Tibial artery (tissue), 4 donors: ENCODE measurements at regions of chr10 and their contacts with region 1.

Region 1: GRCh38 chr10:92965314-92965713 is 95.3 kb upstream of the CYP26C1 start:
- DNase-seq: no peak
- H3K4me3 ChIP-seq: no peak overlapping the region
- H3K27ac ChIP-seq: no peak overlapping the region
- H3K4me1 ChIP-seq: peaks cover 0 to 8% (median 0%) of the 10 kb centered on the region in 4 donors
- H3K27me3 ChIP-seq: no peaks in the 10 kb centered on the region
- CTCF ChIP-seq: peak; percentile 58 to 59

Region 2: GRCh38 chr10:93062514-93063143 is 97.3 kb after region 1 on chr10:
- intact Hi-C with region 1: loop called (anchors 10 kb)
- DNase-seq: no peak
- H3K4me3 ChIP-seq: peak overlapping the region; percentile 22 to 33
- H3K27ac ChIP-seq: no peak overlapping the region
- H3K4me1 ChIP-seq: peaks cover 0 to 44% (median 31%) of the 10 kb centered on the region in 4 donors
- H3K27me3 ChIP-seq: peaks cover 0 to 81% of the 10 kb centered on the region in 2 donors
- CTCF ChIP-seq: peak; percentile 31 to 36